Naive thymus-derived CD4-positive, alpha-beta T cell (primary cell): ENCODE measurements at regions of chr2 and their contacts with region 1.

Region 1: DNA sequence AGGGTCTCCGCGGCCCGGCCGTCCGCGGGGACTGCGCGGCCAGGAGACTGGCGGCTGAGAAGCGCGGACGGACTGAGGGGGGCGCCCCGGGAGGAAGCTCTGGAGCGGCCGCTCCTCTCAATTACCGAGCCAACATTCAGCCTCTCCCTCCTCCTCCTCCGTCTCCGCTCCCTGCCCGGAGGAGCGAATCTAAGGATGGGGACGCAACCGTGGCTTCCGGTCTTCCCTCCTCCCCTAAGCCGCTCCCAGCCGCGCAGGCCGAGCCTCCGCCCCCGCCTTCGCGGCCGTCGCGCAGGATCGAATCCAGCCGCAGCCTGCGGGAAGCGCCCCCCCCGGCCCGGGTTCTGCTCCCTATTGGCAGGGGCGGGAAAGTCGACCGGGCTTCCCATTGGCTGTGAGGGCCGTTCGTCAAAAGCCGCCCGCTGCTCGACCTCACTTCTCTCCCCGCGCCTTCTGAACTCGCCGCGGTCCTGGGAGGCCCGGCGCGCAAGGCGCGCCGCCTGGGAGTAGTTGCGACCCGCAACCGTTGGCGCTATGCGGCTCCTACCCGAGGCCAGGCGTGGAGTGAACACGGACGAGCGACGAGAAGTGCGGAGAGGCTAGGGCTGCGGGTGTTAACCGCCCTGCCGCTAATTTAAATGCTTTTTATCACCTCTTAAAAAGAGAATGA is at the start of gene HNRNPLL:
- DNase-seq: peak; percentile 86 to 98 (median 91)
- ATAC-seq: peak; percentile 91
- H3K4me3 ChIP-seq: peak within 1 kb of the TSS; percentile 86
- H3K4me3 Mint-ChIP-seq: peak within 1 kb of the TSS; percentile 88 to 97 (median 95)
- H3K27ac ChIP-seq: peak within 1 kb of the TSS; percentile 72
- H3K27ac Mint-ChIP-seq: peak within 1 kb of the TSS; percentile 82 to 94 (median 90)
- H3K4me1 ChIP-seq: peaks cover 11 to 15% of the 10 kb centered on the region in 2 donors
- H3K4me1 Mint-ChIP-seq: peaks cover 29 to 57% (median 50%) of the 10 kb centered on the region in 7 donors
- H3K27me3 ChIP-seq: no peaks in the 10 kb centered on the region
- H3K27me3 Mint-ChIP-seq: no peaks in the 10 kb centered on the region
- total RNA-seq, gene HNRNPLL: 10.1 to 66.8 (median 30.2) TPM

Region 2: GRCh38 chr2:38581193-38582147 is 21.4 kb before region 1 on chr2:
- CTCF ChIA-PET with region 1: interaction called, 15 read pairs
- POLR2A ChIA-PET with region 1: interaction called, 4 read pairs
- intact Hi-C with region 1: loop called (anchors 1 kb)
- DNase-seq: peak in 7 of 9 donors; percentile 64 to 83 (median 77)
- ATAC-seq: peak; percentile 94
- H3K4me3 ChIP-seq: no peak overlapping the region
- H3K4me3 Mint-ChIP-seq: no peak overlapping the region
- H3K27ac ChIP-seq: no peak overlapping the region
- H3K27ac Mint-ChIP-seq: no peak overlapping the region
- H3K4me1 ChIP-seq: peaks cover 0 to 3% of the 10 kb centered on the region in 2 donors
- H3K4me1 Mint-ChIP-seq: peaks cover 0 to 23% (median 0%) of the 10 kb centered on the region in 7 donors
- H3K27me3 ChIP-seq: no peaks in the 10 kb centered on the region
- H3K27me3 Mint-ChIP-seq: no peaks in the 10 kb centered on the region

Region 3: GRCh38 chr2:38626326-38627035 is 23.6 kb after region 1 on chr2:
- CTCF ChIA-PET with region 1: interaction called, 4 read pairs
- POLR2A ChIA-PET with region 1: interaction called, 3 read pairs
- intact Hi-C with region 1: loop called in 1 of 2 experiments (anchors 2 kb)
- DNase-seq: peak in 7 of 9 donors; percentile 19 to 54 (median 37)
- ATAC-seq: peak; percentile 45
- H3K4me3 ChIP-seq: no peak overlapping the region
- H3K4me3 Mint-ChIP-seq: peak overlapping the region in 4 of 10 donors; percentile 14 to 60 (median 23)
- H3K27ac ChIP-seq: no peak overlapping the region
- H3K27ac Mint-ChIP-seq: peak overlapping the region in 2 of 9 donors; percentile 35 to 36
- H3K4me1 ChIP-seq: peaks cover 0 to 15% of the 10 kb centered on the region in 2 donors
- H3K4me1 Mint-ChIP-seq: peaks cover 7 to 32% (median 13%) of the 10 kb centered on the region in 7 donors
- H3K27me3 ChIP-seq: no peaks in the 10 kb centered on the region
- H3K27me3 Mint-ChIP-seq: no peaks in the 10 kb centered on the region

Region 4: GRCh38 chr2:38676681-38677080 is 73.8 kb after region 1 on chr2:
- CTCF ChIA-PET with region 1: interaction called, 10 read pairs
- POLR2A ChIA-PET with region 1: interaction called, 5 read pairs
- intact Hi-C with region 1: loop called (anchors 1 to 5 kb)
- DNase-seq: no peak
- ATAC-seq: no peak
- H3K4me3 ChIP-seq: no peak overlapping the region
- H3K4me3 Mint-ChIP-seq: peak overlapping the region in 1 of 10 donors; percentile 1
- H3K27ac ChIP-seq: no peak overlapping the region
- H3K27ac Mint-ChIP-seq: peak overlapping the region in 4 of 9 donors; percentile 27 to 56 (median 34)
- H3K4me1 ChIP-seq: peaks cover 12 to 25% of the 10 kb centered on the region in 2 donors
- H3K4me1 Mint-ChIP-seq: peaks cover 12 to 64% (median 40%) of the 10 kb centered on the region in 7 donors
- H3K27me3 ChIP-seq: no peaks in the 10 kb centered on the region
- H3K27me3 Mint-ChIP-seq: no peaks in the 10 kb centered on the region

Region 5: DNA sequence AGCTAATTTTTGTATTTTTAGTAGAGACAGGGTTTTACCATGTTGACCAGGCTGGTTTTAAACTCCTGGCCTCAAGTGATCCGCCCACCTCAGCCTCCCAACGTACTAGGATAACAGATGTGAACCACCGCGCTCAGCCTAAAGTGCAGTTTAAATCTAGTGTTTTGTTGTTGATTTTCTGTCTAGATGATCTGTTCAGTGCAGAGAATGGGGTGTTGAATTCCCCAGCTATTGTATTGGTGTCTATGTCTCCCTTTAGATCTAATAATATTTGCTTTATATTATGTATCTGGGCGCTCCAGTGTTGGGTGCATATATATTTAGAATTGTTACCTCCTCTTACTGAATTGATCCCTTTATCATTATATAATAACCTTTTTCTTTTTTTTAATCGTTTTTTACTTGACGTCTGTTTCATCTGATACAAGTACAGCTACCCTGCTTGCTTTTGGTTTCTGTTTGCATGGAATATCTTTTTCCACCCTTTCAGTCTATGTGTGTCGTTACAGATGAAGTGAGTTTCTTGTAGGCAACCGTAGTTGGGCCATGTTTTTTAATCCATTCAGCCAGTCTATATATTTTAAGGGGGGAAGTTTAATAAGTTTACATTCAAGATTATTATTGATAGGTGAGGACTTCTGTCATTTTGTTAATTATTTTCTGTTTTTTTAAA is 97.4 kb after region 1 on chr2:
- CTCF ChIA-PET with region 1: no interaction called
- POLR2A ChIA-PET with region 1: no interaction called
- intact Hi-C with region 1: loop called in 1 of 2 experiments (anchors 2 kb)
- DNase-seq: peak in 3 of 9 donors; percentile 14 to 47 (median 31)
- ATAC-seq: peak; percentile 55
- H3K4me3 ChIP-seq: peak overlapping the region; percentile 22
- H3K4me3 Mint-ChIP-seq: peak overlapping the region in 8 of 10 donors; percentile 37 to 73 (median 66)
- H3K27ac ChIP-seq: peak overlapping the region; percentile 29
- H3K27ac Mint-ChIP-seq: peak overlapping the region; percentile 35 to 88 (median 76)
- H3K4me1 ChIP-seq: peaks cover 4 to 63% of the 10 kb centered on the region in 2 donors
- H3K4me1 Mint-ChIP-seq: peaks cover 0 to 64% (median 32%) of the 10 kb centered on the region in 7 donors
- H3K27me3 ChIP-seq: no peaks in the 10 kb centered on the region
- H3K27me3 Mint-ChIP-seq: no peaks in the 10 kb centered on the region

Region 6: DNA sequence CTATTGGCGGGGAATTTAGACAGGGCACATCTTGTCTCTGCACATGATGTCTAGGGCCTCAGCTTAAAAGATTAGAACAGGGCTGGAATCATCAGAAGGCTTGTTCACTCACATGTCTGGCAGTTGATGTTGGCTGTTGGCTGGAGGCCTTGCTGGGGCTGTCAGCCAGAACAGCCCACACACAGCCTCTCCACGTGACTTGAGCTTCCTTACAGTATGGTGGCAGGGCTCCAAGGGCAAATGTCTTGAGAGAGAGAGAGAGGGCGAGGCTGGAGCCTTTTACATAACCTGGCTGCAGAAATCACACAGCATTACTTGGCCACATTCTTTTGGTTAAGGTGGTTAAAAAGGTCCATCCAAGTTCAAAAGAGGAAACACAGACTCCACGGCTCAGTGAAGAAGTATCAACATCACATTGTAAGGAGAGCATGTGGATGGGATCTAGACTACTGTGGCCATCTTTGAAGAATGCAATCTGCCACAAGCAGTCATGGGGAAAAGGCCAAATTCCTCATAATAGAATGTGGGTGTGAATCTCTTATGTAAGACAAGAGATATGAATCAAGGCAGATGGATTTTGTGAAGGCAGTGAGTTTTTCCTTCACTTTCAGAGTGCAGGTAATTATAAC is 117.9 kb after region 1 on chr2:
- CTCF ChIA-PET with region 1: interaction called, 16 read pairs
- POLR2A ChIA-PET with region 1: interaction called, 6 read pairs
- intact Hi-C with region 1: loop called in 1 of 2 experiments (anchors 1 kb)
- DNase-seq: no peak
- ATAC-seq: no peak
- H3K4me3 ChIP-seq: no peak overlapping the region
- H3K4me3 Mint-ChIP-seq: peak overlapping the region in 2 of 10 donors; percentile 28 to 29
- H3K27ac ChIP-seq: no peak overlapping the region
- H3K27ac Mint-ChIP-seq: peak overlapping the region in 4 of 9 donors; percentile 18 to 67 (median 34)
- H3K4me1 ChIP-seq: peaks cover 7 to 27% of the 10 kb centered on the region in 2 donors
- H3K4me1 Mint-ChIP-seq: peaks cover 11 to 51% (median 29%) of the 10 kb centered on the region in 7 donors
- H3K27me3 ChIP-seq: no peaks in the 10 kb centered on the region
- H3K27me3 Mint-ChIP-seq: no peaks in the 10 kb centered on the region

Region 7: DNA sequence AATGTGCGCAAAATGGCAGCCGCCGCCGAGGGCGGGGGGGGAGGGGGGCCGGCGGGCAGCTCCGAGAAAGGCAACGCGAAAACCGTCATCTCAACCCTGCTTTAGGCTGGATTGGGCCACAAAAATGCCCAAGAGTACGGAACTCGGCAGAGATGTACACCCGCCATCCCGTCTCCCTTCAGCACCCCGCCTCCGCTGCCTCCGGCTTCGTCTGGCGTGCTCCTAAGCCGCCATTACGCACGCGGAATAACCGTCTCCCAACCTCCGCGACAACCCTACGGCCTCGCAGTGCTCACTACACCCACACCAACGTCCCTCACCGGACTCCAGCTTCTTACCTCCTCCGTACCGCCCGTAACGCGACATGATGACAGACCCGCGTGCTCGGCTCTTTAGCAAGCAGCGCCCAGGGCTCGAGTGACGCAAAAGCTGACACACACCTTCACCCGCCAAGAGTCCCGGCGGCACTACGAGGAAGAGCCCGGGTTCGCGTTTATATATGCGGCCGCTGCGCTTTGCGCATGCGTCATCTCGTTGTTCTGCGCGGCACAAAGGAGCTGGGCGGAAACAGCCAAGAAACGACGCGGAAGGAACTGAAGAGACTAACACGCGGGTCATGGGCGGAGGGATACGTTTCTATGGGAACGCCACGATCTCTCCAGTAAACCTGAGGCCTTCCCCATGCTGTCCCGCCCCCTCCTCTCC is 148.2 kb after region 1 on chr2 and contains the start of gene SRSF7:
- CTCF ChIA-PET with region 1: interaction called, 4 read pairs
- POLR2A ChIA-PET with region 1: interaction called, 61 read pairs
- intact Hi-C with region 1: loop called (anchors 1 kb)
- DNase-seq: peak; percentile 95 to 98 (median 97)
- ATAC-seq: peak; percentile 87
- H3K4me3 ChIP-seq: peak within 1 kb of the TSS; percentile 96
- H3K4me3 Mint-ChIP-seq: peak within 1 kb of the TSS; percentile 95 to 100 (median 99)
- H3K27ac ChIP-seq: peak within 1 kb of the TSS; percentile 95
- H3K27ac Mint-ChIP-seq: peak within 1 kb of the TSS; percentile 98 to 100 (median 100)
- H3K4me1 ChIP-seq: peaks cover 31 to 41% of the 10 kb centered on the region in 2 donors
- H3K4me1 Mint-ChIP-seq: peaks cover 40 to 72% (median 58%) of the 10 kb centered on the region in 7 donors
- H3K27me3 ChIP-seq: no peaks in the 10 kb centered on the region
- H3K27me3 Mint-ChIP-seq: peaks cover 0 to 5% (median 0%) of the 10 kb centered on the region in 5 donors
- total RNA-seq, gene SRSF7: 259 to 503 (median 310) TPM

Region 8: DNA sequence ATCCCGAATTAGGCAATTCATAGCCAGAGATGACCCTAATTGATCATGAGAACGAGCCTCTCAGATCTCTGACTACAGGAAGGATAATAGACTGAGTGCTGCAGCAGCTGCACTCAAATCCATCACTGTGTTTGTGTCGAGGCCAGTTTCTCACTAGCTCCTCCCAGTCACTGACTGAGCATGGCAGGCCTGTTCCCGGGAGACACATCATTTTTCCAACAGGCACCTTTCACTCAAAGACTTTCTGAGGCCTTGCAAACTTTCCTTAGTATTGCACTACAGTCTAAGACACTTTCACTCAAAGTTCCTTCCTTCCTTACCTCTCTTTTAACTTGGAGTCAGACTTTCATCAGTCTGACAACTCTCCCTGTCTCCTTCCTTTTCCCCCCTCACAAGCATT is 504.3 kb after region 1 on chr2:
- CTCF ChIA-PET with region 1: no interaction called
- POLR2A ChIA-PET with region 1: no interaction called
- intact Hi-C with region 1: no loop called
- DNase-seq: no peak
- ATAC-seq: no peak
- H3K4me3 ChIP-seq: no peak overlapping the region
- H3K4me3 Mint-ChIP-seq: peak overlapping the region in 3 of 10 donors; percentile 12 to 41 (median 14)
- H3K27ac ChIP-seq: no peak overlapping the region
- H3K27ac Mint-ChIP-seq: peak overlapping the region in 5 of 9 donors; percentile 6 to 75 (median 22)
- H3K4me1 ChIP-seq: peaks cover 1 to 4% of the 10 kb centered on the region in 2 donors
- H3K4me1 Mint-ChIP-seq: peaks cover 47 to 79% (median 69%) of the 10 kb centered on the region in 7 donors
- H3K27me3 ChIP-seq: no peaks in the 10 kb centered on the region
- H3K27me3 Mint-ChIP-seq: no peaks in the 10 kb centered on the region